Activated B cell treated with CpG ODN at 0.5 μM for 24 hours (primary cell): ENCODE measurements at regions of chr5 and their contacts with region 1.

Region 1: GRCh38 chr5:75236322-75237316 is at the start of gene ANKRD31:
- DNase-seq: peak; percentile 89
- ATAC-seq: peak; percentile 99
- H3K4me3 Mint-ChIP-seq: peak within 1 kb of the TSS; percentile 93
- H3K27ac Mint-ChIP-seq: peak within 1 kb of the TSS; percentile 83
- H3K4me1 Mint-ChIP-seq: peaks cover 9% of the 10 kb centered on the region
- H3K27me3 Mint-ChIP-seq: peaks cover 3% of the 10 kb centered on the region
- CTCF ChIP-seq: peak; percentile 62
- total RNA-seq, gene ANKRD31: 0.13 and 0.15 TPM in 2 replicates

Region 2: GRCh38 chr5:73498057-73499008 is 1738.3 kb before region 1 on chr5 and contains the start of gene BTF3:
- CTCF ChIA-PET with region 1: no interaction called
- POLR2A ChIA-PET with region 1: no interaction called
- intact Hi-C with region 1: loop called (anchors 5 kb)
- DNase-seq: peak; percentile 88
- ATAC-seq: peak; percentile 96
- H3K4me3 Mint-ChIP-seq: peak within 1 kb of the TSS; percentile 97
- H3K27ac Mint-ChIP-seq: peak within 1 kb of the TSS; percentile 97
- H3K4me1 Mint-ChIP-seq: peaks cover 33% of the 10 kb centered on the region
- H3K27me3 Mint-ChIP-seq: peaks cover 4% of the 10 kb centered on the region
- CTCF ChIP-seq: no peak
- total RNA-seq, gene BTF3: 753 and 798 TPM in 2 replicates

Region 3: DNA sequence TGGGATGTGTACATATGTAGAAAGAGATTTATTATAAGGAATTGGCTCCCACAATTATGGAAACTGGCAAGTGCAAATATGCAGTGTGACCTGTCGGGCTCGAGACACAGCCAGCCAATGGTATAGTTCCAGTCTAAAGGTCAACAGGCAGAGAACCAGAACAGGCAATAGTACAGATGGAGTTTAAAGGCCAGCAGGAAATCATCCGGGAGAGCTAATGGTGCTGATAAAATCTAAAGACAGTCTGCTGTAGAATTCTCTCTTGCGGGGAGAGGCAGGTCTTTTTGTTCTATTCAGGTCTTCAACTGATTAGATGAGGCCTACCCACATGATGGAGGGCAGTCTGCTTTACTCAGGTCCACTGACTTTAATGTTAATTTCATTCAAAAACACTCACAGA is 21.7 kb before region 1 on chr5:
- CTCF ChIA-PET with region 1: no interaction called
- POLR2A ChIA-PET with region 1: no interaction called
- intact Hi-C with region 1: no loop called
- DNase-seq: no peak
- ATAC-seq: no peak
- H3K4me3 Mint-ChIP-seq: no peak overlapping the region
- H3K27ac Mint-ChIP-seq: no peak overlapping the region
- H3K4me1 Mint-ChIP-seq: no peaks in the 10 kb centered on the region
- H3K27me3 Mint-ChIP-seq: peaks cover 15% of the 10 kb centered on the region
- CTCF ChIP-seq: no peak

Region 4: DNA sequence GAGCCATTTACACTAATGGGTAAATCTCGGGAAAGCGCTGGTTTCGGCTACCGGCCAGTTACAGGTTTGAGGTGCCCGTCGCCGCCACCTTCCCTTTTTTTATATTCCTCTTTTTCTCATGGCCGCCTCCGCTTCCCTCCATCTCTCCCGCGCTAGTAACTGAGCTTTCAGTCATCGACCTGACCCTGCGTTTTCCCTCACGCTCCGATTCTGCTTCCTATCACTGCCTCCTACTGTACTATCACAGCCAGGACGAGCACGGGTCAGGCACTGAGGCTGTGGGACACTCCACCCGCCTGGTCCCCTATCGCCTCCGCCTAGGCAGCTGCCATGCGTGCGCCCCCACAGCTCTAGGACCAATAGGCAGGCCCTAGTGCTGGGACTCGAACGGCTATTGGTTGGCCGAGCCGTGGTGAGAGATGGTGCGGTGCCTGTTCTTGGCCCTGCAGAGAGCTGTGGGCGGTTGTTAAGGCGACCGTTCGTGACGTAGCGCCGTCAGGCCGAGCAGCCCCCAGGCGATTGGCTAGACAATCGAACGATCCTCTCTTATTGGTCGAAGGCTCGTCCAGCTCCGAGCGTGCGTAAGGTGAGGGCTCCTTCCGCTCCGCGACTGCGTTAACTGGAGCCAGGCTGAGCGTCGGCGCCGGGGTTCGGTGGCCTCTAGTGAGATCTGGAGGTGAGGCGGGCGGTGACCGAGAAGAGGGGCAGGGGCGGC is 100.2 kb after region 1 on chr5 and contains the start of gene HMGCR:
- CTCF ChIA-PET with region 1: interaction called, 20 read pairs
- POLR2A ChIA-PET with region 1: interaction called, 31 read pairs
- intact Hi-C with region 1: loop called (anchors 1 kb)
- DNase-seq: peak; percentile 89
- ATAC-seq: peak; percentile 95
- H3K4me3 Mint-ChIP-seq: no peak within 1 kb of the TSS
- H3K27ac Mint-ChIP-seq: no peak within 1 kb of the TSS
- H3K4me1 Mint-ChIP-seq: peaks cover 30% of the 10 kb centered on the region
- H3K27me3 Mint-ChIP-seq: no peaks in the 10 kb centered on the region
- CTCF ChIP-seq: no peak
- total RNA-seq, gene HMGCR: 105 and 131 TPM in 2 replicates

Region 5: DNA sequence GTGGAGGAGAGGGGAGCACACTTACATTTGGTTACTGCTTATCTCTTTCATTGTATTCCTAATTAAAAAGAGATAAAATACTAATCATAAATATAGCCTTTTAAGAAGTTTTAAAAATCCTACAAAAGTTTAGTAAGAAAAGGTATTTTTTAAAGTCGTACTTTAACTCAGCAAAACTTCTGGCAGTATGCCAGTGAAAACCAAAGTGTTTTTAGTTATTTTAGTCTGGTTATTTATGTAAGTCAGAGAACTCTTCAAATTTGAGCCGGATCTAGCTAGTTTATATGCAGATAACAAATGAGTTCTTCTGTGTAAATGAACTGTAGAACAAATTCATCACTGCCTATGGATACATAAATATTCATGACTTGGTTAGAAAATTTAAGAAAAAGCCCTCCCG is 338.2 kb after region 1 on chr5:
- CTCF ChIA-PET with region 1: no interaction called
- POLR2A ChIA-PET with region 1: no interaction called
- intact Hi-C with region 1: loop called (anchors 5 kb)
- DNase-seq: no peak
- ATAC-seq: no peak
- H3K4me3 Mint-ChIP-seq: peak overlapping the region; percentile 76
- H3K27ac Mint-ChIP-seq: peak overlapping the region; percentile 86
- H3K4me1 Mint-ChIP-seq: peaks cover 37% of the 10 kb centered on the region
- H3K27me3 Mint-ChIP-seq: no peaks in the 10 kb centered on the region
- CTCF ChIP-seq: no peak

Region 6: GRCh38 chr5:75717082-75717922 is 480.7 kb after region 1 on chr5 and contains the start of gene POC5:
- CTCF ChIA-PET with region 1: no interaction called
- POLR2A ChIA-PET with region 1: interaction called, 7 read pairs
- intact Hi-C with region 1: loop called (anchors 1 kb)
- DNase-seq: peak; percentile 96
- ATAC-seq: peak; percentile 92
- H3K4me3 Mint-ChIP-seq: peak within 1 kb of the TSS; percentile 98
- H3K27ac Mint-ChIP-seq: peak within 1 kb of the TSS; percentile 98
- H3K4me1 Mint-ChIP-seq: peaks cover 32% of the 10 kb centered on the region
- H3K27me3 Mint-ChIP-seq: peaks cover 2% of the 10 kb centered on the region
- CTCF ChIP-seq: no peak
- total RNA-seq, gene POC5: 27.6 and 29.8 TPM in 2 replicates

Region 7: DNA sequence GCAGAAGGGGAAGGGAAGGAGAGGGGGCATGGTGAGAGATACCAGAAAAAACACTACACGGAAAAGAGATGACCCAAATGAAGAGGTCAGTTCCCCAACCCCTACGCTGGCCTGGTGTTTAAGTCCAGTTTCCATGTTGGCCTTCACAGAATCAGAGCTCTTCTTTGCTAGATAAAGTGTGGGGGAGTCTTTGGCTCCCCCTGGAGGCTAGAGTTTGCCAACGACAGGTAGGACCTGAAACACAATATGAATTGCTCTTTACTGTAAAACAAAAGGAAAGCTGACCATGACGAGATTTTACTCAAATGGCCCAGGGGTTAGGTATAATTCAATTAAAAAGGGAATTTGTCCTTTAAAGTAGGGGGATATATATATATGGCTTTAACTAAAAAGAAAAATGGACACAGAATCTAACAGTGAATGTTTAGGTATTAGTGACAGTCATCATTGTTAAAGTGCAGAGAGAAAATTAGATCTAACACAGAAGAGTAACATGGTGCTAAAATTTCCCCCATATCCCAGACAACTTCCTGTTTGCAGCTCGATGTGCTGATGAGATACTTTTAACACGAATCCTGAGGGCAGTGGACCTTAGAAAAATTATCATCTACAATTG is 938.5 kb after region 1 on chr5:
- CTCF ChIA-PET with region 1: interaction called, 8 read pairs
- POLR2A ChIA-PET with region 1: no interaction called
- intact Hi-C with region 1: loop called (anchors 1 kb)
- DNase-seq: peak; percentile 16
- ATAC-seq: peak; percentile 57
- H3K4me3 Mint-ChIP-seq: peak overlapping the region; percentile 2
- H3K27ac Mint-ChIP-seq: no peak overlapping the region
- H3K4me1 Mint-ChIP-seq: peaks cover 15% of the 10 kb centered on the region
- H3K27me3 Mint-ChIP-seq: peaks cover 2% of the 10 kb centered on the region
- CTCF ChIP-seq: no peak